Activated CD4-positive, alpha-beta memory T cell treated with anti-CD3 and anti-CD28 coated beads, Interleukin-2, amount 10 ng/mL, durations not matched to agents 7 days and 5 days (primary cell): ENCODE measurements at regions of chr6 and their contacts with region 1.

Region 1: GRCh38 chr6:27132532-27133280 is 114.8 kb upstream of the PRSS16 start:
- DNase-seq: peak; percentile 95
- H3K4me3 Mint-ChIP-seq: no peak overlapping the region
- H3K27ac Mint-ChIP-seq: no peak overlapping the region
- H3K4me1 Mint-ChIP-seq: peaks cover 60% of the 10 kb centered on the region
- H3K27me3 Mint-ChIP-seq: no peaks in the 10 kb centered on the region

Region 2: DNA sequence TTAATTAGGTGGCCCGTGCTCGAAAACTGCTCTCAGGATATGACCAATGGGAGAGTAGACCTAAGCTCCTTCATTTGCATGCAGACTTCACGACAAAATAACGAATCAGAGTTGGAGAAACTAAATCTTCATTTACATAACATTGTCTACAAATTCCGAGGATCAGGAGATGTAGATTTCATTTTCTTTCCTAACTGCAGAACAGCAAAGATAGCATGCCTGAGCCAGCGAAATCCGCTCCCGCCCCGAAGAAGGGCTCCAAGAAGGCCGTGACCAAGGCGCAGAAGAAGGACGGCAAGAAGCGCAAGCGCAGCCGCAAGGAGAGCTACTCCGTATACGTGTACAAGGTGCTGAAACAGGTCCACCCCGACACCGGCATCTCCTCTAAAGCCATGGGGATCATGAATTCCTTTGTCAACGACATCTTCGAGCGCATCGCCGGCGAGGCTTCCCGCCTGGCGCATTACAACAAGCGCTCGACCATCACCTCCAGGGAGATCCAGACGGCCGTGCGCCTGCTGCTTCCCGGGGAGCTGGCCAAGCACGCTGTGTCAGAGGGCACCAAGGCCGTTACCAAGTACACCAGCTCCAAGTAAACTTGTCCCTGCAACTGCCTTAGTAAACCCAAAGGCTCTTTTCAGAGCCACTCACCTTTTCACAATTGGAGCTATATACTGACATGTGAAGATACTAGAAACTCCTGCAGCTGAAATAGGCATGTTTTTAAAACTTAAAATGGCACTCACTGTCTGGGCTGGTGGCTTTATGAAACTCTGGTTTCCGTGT is 948.9 kb before region 1 on chr6:
- CTCF ChIA-PET with region 1: no interaction called
- POLR2A ChIA-PET with region 1: interaction called, 28 read pairs
- DNase-seq: peak; percentile 78
- H3K4me3 Mint-ChIP-seq: peak overlapping the region; percentile 75
- H3K27ac Mint-ChIP-seq: peak overlapping the region; percentile 92
- H3K4me1 Mint-ChIP-seq: peaks cover 71% of the 10 kb centered on the region
- H3K27me3 Mint-ChIP-seq: no peaks in the 10 kb centered on the region

Region 3: GRCh38 chr6:27177485-27178406 is 45.0 kb after region 1 on chr6:
- CTCF ChIA-PET with region 1: interaction called, 9 read pairs
- POLR2A ChIA-PET with region 1: interaction called, 20 read pairs
- DNase-seq: peak; percentile 80
- H3K4me3 Mint-ChIP-seq: peak overlapping the region; percentile 92
- H3K27ac Mint-ChIP-seq: peak overlapping the region; percentile 88
- H3K4me1 Mint-ChIP-seq: peaks cover 20% of the 10 kb centered on the region
- H3K27me3 Mint-ChIP-seq: peaks cover 21% of the 10 kb centered on the region

Region 4: GRCh38 chr6:27213544-27214125 is 80.9 kb after region 1 on chr6:
- CTCF ChIA-PET with region 1: no interaction called
- POLR2A ChIA-PET with region 1: no interaction called
- DNase-seq: no peak
- H3K4me3 Mint-ChIP-seq: peak overlapping the region; percentile 64
- H3K27ac Mint-ChIP-seq: no peak overlapping the region
- H3K4me1 Mint-ChIP-seq: peaks cover 30% of the 10 kb centered on the region
- H3K27me3 Mint-ChIP-seq: peaks cover 12% of the 10 kb centered on the region

Region 5: DNA sequence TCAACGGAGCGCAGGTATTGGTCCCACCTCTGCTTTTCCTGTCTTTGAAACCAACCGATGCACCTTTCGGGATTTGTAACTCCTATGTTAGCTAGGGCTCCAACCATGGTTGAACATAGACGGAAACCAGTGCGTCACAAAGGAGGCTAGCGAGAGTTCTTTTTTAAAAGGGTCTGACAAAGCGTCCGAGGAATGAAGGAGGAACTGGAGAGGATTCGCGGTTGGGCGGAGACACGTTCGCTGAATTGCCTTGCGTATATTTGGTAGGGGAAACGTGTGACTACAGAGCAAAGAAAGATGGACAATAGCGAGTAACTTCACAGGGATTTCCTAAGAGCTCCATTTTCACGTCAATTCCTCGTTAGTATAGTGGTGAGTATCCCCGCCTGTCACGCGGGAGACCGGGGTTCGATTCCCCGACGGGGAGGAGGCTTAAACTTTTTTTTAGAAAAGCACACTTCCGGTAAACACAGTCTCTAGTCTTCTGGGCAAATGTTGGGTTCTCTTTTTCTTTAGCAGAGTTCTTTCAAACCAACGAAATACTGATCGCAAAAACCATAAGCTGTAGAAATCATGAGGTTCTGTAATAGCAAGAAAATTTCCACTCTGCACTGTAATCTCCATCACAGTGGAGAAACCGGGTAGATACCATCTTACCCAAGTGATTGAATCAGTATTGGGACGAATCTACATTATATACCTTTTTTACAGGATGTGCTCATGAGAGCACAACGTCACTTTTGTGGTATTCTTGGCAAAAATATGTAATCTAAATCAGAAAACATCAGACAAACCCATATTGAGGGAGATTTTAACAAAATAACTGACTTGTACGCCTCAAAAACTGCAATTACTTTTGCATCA is 346.8 kb after region 1 on chr6:
- CTCF ChIA-PET with region 1: no interaction called
- POLR2A ChIA-PET with region 1: interaction called, 11 read pairs
- DNase-seq: peak; percentile 86
- H3K4me3 Mint-ChIP-seq: no peak overlapping the region
- H3K27ac Mint-ChIP-seq: no peak overlapping the region
- H3K4me1 Mint-ChIP-seq: peaks cover 10% of the 10 kb centered on the region
- H3K27me3 Mint-ChIP-seq: peaks cover 4% of the 10 kb centered on the region

Region 6: GRCh38 chr6:27816906-27817305 is 684.2 kb after region 1 on chr6:
- CTCF ChIA-PET with region 1: no interaction called
- POLR2A ChIA-PET with region 1: interaction called, 390 read pairs
- DNase-seq: no peak
- H3K4me3 Mint-ChIP-seq: no peak overlapping the region
- H3K27ac Mint-ChIP-seq: peak overlapping the region; percentile 44
- H3K4me1 Mint-ChIP-seq: peaks cover 52% of the 10 kb centered on the region
- H3K27me3 Mint-ChIP-seq: no peaks in the 10 kb centered on the region

Region 7: GRCh38 chr6:27838058-27838944 is 705.6 kb after region 1 on chr6:
- CTCF ChIA-PET with region 1: no interaction called
- POLR2A ChIA-PET with region 1: interaction called, 99 read pairs
- DNase-seq: peak; percentile 90
- H3K4me3 Mint-ChIP-seq: no peak overlapping the region
- H3K27ac Mint-ChIP-seq: no peak overlapping the region
- H3K4me1 Mint-ChIP-seq: peaks cover 31% of the 10 kb centered on the region
- H3K27me3 Mint-ChIP-seq: no peaks in the 10 kb centered on the region